ENCODE measurements at regions of chr16 and their contacts with region 1.

Region 1: DNA sequence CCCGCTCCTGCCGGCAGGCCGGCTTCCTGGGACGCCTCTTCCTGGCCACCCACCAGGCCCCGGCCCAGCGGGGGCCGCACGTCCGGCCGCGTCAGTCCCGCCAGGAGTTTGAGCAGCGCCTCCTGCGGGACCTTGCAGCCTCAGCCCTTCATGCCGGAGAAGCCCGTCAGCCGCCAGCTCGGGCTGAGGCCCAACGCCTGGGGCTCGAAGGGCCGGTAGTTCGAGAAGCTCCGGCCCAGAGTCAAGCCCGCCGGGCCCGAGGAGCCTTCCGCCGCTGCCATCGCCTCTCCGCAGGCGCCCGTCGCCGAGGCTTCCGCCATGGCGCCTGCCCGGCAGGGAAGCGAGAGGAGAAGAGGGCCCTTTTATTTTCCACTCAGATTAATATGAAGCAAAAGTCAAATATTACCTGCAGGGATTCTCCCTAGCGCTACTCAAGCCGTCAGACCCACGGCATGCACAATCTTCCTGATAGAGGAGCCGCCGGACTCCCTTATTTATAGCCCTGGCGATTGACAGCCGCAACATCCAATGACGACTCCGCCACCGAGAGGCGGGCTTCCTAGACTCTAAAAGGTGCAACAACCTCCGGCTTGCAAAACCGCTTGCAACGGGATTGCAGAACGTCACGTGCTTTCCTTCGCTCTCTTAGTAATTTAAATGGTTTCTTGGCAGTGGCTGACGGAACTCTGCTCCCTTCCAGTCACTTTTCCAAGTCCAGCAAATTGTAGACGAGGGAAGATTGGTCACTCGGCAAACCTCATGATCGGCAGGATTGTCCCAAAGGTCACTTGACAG is at the start of gene SEPHS2:
- H3K4me3 ChIP-seq: peak within 1 kb of the TSS; percentile 79
- H3K27ac ChIP-seq: peak within 1 kb of the TSS; percentile 70
- H3K4me1 ChIP-seq: peaks cover 3% of the 10 kb centered on the region; the same call in 1 of the 2 replicates
- CTCF ChIP-seq: peak; percentile 93

Region 2: GRCh38 chr16:30429678-30430427 is 15.8 kb before region 1 on chr16 and contains the start of gene DCTPP1:
- CTCF ChIA-PET with region 1: interaction called, 27 read pairs
- POLR2A ChIA-PET with region 1: interaction called, 19 read pairs
- H3K4me3 ChIP-seq: peak within 1 kb of the TSS; percentile 76
- H3K27ac ChIP-seq: peak within 1 kb of the TSS; percentile 12; the same call in 1 of the 2 replicates
- H3K4me1 ChIP-seq: no peaks in the 10 kb centered on the region
- CTCF ChIP-seq: peak; percentile 99

Region 3: DNA sequence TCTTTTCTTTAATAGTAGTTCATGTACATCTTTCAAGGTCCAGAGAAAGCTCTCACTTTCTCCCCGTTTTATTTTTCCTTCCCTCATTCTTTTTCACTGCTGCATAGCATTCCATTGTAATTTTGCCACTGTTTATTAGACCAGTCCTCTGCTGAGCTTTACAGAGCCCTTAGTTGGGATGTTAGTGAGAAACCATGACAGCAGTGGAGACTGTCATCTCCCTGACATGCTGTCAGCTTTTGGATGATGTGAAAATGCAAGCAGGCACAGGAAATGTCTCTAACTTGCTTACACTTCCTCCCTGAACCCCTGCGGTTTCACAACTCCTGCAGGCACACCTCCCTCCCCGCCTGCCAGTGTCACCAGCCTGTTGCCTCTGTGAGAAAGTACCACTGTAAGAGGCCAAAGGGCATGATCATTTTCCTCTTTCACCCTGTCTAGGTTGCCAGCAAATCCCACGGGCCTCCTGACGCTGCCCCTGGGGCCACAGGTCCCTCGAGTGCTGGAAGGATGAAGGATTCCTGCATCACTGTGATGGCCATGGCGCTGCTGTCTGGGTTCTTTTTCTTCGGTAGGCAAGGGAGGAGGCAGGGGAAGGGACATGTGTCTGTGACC is 26.8 kb after region 1 on chr16 and contains the start of gene ITGAL:
- CTCF ChIA-PET with region 1: interaction called, 15 read pairs
- POLR2A ChIA-PET with region 1: no interaction called
- H3K4me3 ChIP-seq: no peak within 1 kb of the TSS
- H3K27ac ChIP-seq: no peak within 1 kb of the TSS
- H3K4me1 ChIP-seq: no peaks in the 10 kb centered on the region
- CTCF ChIP-seq: no peak

Region 4: DNA sequence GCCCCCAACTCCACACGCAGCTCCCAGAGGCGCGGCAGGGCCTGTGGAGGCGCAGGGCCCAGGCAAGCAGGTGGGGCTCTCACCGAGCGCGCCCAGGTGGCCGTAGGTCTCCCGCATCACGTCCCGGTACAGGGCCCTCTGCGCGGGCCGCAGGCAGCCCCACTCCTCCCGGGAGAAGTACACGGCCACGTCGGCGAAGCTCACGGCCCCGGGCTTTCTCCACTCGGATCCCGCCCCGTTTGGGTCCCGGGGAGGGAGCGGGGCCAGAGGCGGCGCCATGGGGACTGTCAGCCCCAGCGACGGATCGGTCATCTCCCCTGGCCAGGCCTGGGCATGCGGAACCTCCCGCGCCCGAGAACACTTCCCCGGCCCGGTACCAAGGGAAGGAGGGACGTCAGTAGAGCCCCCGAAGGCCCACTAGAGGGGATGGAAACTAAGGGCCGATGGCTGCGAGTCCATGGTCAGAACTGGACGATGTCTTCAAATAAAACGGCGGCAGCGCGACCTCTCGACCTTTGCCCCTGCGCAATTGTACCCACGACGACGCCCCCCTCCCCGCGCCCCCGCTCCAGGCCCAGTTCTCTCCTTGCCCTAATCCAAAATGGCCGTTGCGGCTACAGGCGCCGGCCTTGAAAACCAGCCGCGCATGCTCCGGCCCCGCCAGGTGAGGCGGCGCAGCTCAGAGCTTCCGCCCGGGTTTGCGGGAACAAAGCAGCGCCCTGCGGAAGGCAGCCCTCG is 88.9 kb after region 1 on chr16 and contains the start of gene ZNF747:
- CTCF ChIA-PET with region 1: interaction called, 11 read pairs
- POLR2A ChIA-PET with region 1: interaction called, 7 read pairs
- H3K4me3 ChIP-seq: peak within 1 kb of the TSS; percentile 59
- H3K27ac ChIP-seq: peak within 1 kb of the TSS; percentile 91
- H3K4me1 ChIP-seq: peaks cover 2% of the 10 kb centered on the region; the same call in 1 of the 2 replicates
- CTCF ChIP-seq: peak; percentile 75

Region 5: GRCh38 chr16:30609926-30610839 is 164.6 kb after region 1 on chr16 and contains the start of gene ZNF689:
- CTCF ChIA-PET with region 1: interaction called, 15 read pairs
- POLR2A ChIA-PET with region 1: interaction called, 3 read pairs
- H3K4me3 ChIP-seq: peak within 1 kb of the TSS; percentile 81
- H3K27ac ChIP-seq: peak within 1 kb of the TSS; percentile 96
- H3K4me1 ChIP-seq: no peaks in the 10 kb centered on the region
- CTCF ChIP-seq: peak; percentile 78

Region 6: GRCh38 chr16:30628627-30629540 is 183.3 kb after region 1 on chr16:
- CTCF ChIA-PET with region 1: interaction called, 18 read pairs
- POLR2A ChIA-PET with region 1: no interaction called
- H3K4me3 ChIP-seq: no peak overlapping the region
- H3K27ac ChIP-seq: no peak overlapping the region
- H3K4me1 ChIP-seq: no peaks in the 10 kb centered on the region
- CTCF ChIP-seq: peak; percentile 83

Region 7: GRCh38 chr16:30874821-30875717 is 429.5 kb after region 1 on chr16:
- CTCF ChIA-PET with region 1: no interaction called
- POLR2A ChIA-PET with region 1: no interaction called
- H3K4me3 ChIP-seq: peak overlapping the region; percentile 51
- H3K27ac ChIP-seq: peak overlapping the region; percentile 94
- H3K4me1 ChIP-seq: no peaks in the 10 kb centered on the region
- CTCF ChIP-seq: peak; percentile 46; the same call in 1 of the 2 replicates